Heart left ventricle (tissue), 16 donors: ENCODE measurements at regions of chr6 and their contacts with region 1.

Region 1: DNA sequence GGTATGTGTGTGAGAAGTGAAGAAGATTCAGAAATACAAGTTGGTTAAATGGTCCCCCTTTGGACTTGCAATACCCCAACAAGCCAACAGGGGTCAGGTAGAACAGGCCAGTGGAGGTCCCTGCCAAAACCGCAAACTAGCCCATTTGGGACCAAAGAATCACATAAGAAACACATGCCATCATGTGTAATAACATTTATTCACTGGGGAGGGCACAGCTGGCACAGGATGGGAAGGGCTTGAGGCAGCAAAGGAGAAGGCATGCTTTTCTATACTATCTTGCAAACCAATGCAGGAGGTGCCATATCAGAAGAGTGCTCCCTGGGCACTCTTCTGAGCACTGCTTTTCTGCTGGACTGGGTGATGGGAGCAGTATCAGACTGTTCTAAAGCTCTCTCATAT is 116.1 kb upstream of the TRAF3IP2 start:
- DNase-seq: peak in 1 of 5 donors; percentile 35
- ATAC-seq: peak in 3 of 4 donors; percentile 11 to 39 (median 21)
- H3K4me3 ChIP-seq: no peak overlapping the region
- H3K27ac ChIP-seq: peak overlapping the region in 5 of 12 donors; percentile 8 to 60 (median 16)
- H3K4me1 ChIP-seq: peaks cover 0 to 54% (median 32%) of the 10 kb centered on the region in 12 donors
- H3K27me3 ChIP-seq: no peaks in the 10 kb centered on the region
- CTCF ChIP-seq: peak in 11 of 12 donors; percentile 18 to 50 (median 41)
- POLR2A ChIP-seq: no peak

Region 2: DNA sequence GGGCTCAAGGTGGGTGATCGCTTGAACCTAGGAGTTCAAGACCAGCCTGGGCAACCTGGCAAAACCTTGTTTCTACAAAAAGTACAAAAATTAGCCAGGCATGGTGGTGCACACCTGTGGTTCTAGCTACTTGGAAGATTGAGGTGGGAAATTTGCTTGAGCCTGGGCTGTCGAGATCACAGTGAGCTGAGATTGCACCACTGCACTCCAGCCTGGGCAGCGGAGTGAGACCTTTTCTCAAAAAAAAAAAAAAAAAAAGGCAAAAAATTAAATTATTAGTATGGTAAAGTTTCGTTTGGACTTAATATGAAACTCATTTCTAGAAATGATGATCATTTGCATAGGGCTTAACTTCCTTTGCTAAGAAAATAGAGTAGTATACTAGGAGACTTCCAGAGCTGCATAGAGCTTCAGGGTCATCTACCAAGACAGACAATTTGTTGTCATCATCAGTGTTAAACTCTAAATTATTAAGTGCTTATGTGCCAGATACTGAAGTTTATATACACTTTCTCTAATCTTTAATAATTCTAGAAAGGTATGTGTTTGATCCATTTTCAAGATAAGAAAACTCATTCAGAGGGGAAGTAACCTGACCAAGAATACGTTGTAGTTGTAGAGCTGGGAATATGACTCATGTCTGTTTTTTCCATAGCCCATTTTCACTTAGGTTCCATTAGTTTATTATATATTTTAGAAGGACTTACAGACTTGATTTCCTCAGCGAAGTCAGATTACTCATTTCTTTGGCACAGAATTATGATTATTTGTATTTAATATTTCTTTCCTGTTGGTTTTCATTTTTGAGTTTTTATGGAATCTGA is 550.0 kb before region 1 on chr6:
- intact Hi-C with region 1: no loop called
- DNase-seq: no peak
- ATAC-seq: no peak
- H3K4me3 ChIP-seq: no peak overlapping the region
- H3K27ac ChIP-seq: no peak overlapping the region
- H3K4me1 ChIP-seq: peaks cover 0 to 4% (median 0%) of the 10 kb centered on the region in 12 donors
- H3K27me3 ChIP-seq: no peaks in the 10 kb centered on the region
- CTCF ChIP-seq: no peak
- POLR2A ChIP-seq: no peak

Region 3: DNA sequence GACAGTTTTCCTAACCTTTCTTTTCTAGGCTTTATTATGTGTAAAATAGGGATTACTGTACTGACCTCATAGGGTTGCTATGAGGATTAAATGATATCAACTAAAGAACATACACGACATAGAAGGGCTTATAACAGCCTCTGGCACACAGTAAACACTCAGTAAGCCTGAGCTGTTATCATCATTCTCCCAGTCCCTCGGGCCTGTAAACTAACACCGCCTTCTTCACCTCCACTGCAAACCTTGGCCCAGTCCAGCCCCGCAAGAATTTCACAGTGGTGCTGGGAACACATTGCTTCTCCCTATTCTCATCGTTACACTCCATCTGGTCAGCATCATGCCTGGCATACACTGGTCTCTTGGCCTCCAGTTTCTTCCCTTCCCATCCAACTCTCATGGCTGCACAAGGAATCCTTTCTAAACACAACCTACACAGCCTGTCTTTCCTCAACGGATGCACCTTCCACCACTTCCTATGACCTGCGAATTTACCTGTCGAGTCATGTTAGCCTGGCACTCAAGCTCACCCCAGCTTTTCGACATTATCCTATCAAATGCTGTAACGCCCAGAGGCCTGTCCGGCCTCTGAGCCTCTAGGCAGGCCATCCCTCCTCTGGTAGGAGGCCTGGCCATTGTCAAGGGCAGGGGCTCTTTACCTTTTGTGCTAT is 59.4 kb after region 1 on chr6:
- intact Hi-C with region 1: loop called in 1 of 10 experiments (anchors 10 kb)
- DNase-seq: no peak
- ATAC-seq: peak; percentile 25 to 76 (median 50)
- H3K4me3 ChIP-seq: no peak overlapping the region
- H3K27ac ChIP-seq: peak overlapping the region in 8 of 12 donors; percentile 9 to 60 (median 44)
- H3K4me1 ChIP-seq: peaks cover 6 to 85% (median 63%) of the 10 kb centered on the region in 12 donors
- H3K27me3 ChIP-seq: no peaks in the 10 kb centered on the region
- CTCF ChIP-seq: no peak
- POLR2A ChIP-seq: no peak

Region 4: DNA sequence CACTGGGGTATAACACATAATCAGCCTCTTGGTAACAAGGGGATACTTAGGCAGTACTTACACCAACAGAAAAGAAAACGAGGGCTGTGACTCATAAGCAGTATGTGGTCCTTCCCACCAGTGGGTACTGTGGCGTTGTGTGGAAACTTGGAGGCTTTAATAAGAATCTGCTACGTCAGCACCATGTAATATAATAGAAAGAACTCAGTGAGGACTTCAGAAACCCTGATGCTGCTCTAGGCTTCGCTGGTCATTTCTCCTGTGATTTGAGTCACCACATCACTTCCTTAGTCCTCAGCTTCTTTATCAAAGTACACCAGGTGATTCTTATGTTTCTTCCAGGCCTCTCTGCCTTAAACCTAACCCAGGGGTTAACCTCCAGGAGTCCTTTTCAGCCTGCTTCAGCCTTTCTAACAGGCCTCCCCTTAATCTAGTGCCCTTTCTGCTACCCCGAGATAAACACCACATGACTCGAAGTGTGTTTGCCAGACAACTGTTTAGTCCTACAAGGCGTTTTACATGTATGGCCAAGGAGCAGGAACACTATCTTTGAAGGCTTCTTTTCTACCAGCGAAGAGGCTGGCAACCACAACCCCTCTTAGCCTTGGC is 83.0 kb after region 1 on chr6:
- intact Hi-C with region 1: loop called in 1 of 10 experiments (anchors 5 kb)
- DNase-seq: no peak
- ATAC-seq: peak; percentile 57 to 75 (median 68)
- H3K4me3 ChIP-seq: no peak overlapping the region
- H3K27ac ChIP-seq: peak overlapping the region in 10 of 12 donors; percentile 13 to 84 (median 44)
- H3K4me1 ChIP-seq: peaks cover 2 to 67% (median 37%) of the 10 kb centered on the region in 12 donors
- H3K27me3 ChIP-seq: no peaks in the 10 kb centered on the region
- CTCF ChIP-seq: peak in 4 of 12 donors; percentile 6 to 28 (median 14)
- POLR2A ChIP-seq: no peak